Right lobe of liver (tissue), 6 donors: ENCODE measurements at regions of chr10 and their contacts with region 1.

Region 1: DNA sequence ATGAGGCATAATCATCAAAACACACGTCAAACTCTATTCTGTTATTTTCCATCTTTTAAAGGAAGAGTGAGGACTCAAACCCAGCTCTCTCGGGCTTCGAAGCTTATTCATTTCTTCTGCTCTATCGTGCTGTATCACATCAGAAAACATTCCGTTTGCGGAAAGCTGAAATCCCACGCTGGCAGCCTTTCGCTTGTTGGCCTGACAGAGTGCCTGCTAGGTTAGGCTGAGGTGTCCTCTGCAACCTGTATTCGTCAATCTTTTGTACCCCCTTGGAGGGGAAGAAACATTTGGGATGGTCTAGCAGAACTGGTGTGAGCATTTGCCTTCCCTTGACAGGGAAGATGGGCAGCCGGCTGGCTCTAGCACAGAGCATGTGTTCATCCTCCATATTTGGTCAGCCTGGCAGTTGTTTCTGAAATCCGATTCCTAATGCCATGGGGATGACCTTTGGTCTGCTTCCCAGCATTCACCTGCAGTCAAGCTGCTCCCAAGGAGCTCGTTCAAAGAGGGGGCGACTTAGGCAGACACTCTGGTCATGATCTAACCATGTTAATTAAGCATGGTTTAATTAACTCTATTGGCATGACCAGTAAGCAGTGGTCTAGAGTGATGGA is 55.2 kb downstream of the TACC2 start:
- DNase-seq: peak in 1 of 3 donors; percentile 62
- ATAC-seq: peak; percentile 65 to 75 (median 74)
- H3K4me3 ChIP-seq: peak overlapping the region in 1 of 3 donors; percentile 23
- H3K27ac ChIP-seq: peak overlapping the region in 2 of 3 donors; percentile 72 to 74
- H3K4me1 ChIP-seq: peaks cover 0 to 6% (median 0%) of the 10 kb centered on the region in 4 donors
- H3K27me3 ChIP-seq: no peaks in the 10 kb centered on the region
- CTCF ChIP-seq: no peak
- POLR2A ChIP-seq: no peak

Region 2: DNA sequence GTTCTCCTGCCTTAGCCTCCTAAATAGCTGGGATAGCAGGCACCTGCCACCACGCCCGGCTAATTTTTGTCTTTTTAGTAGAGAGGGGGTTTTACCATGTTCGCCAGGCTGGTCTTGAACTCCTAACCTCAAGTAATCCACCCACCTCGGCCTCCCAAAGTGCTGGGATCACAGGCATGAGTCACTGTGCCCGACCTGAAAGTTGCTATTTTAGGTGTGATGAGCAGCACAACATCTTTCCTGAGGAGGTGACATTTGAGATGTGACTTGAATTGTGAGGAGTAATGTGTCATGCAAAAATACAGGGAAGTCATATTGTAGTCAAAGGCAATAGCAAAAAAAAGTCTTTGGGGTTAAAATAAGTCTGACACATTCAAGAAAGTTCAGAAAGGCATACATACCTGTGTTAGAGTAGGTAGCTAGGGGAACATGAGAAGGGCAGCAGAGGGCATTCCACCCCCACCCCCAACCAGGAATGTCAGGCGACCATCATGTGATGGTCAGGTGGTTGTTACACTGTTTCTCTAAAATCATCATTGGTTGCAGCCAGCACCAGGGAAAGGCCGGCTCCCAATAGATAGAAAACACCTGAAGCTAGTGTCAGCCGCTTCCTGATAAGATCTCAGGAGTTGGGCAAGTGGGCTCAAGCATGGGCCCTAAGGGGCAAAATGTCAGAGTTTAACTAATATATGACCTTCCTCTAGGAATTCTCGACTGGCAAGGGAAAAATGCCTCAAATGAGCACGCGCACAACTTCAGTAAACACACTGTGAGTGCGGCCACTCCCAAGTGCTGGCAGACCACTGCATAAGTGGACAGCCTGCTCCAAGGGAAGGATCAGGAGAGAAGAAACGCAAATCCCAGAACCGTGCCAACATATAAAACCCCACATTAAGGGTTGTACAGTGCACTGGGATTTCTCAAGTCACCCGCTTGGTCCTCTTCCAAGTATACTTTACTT is 55.5 kb before region 1 on chr10 and contains the start of gene TACC2:
- intact Hi-C with region 1: loop called in 1 of 2 experiments (anchors 10 kb)
- DNase-seq: no peak
- ATAC-seq: no peak
- H3K4me3 ChIP-seq: peak within 1 kb of the TSS in 2 of 3 donors; percentile 6 to 27
- H3K27ac ChIP-seq: peak within 1 kb of the TSS in 2 of 3 donors; percentile 18 to 67
- H3K4me1 ChIP-seq: peaks cover 0 to 11% (median 0%) of the 10 kb centered on the region in 4 donors
- H3K27me3 ChIP-seq: no peaks in the 10 kb centered on the region
- CTCF ChIP-seq: no peak
- POLR2A ChIP-seq: no peak
- total RNA-seq, gene TACC2: 16.2 to 21.1 (median 18.8) TPM